PC-3 (cell line): ENCODE measurements at regions of chr14 and their contacts with region 1.

Region 1: GRCh38 chr14:69643443-69644164 is 32.2 kb downstream of the SUSD6 start:
- DNase-seq: peak; percentile 99
- ATAC-seq: peak; percentile 93
- H3K4me3 ChIP-seq: peak overlapping the region; percentile 24; the same call in 1 of the 2 replicates
- H3K27ac ChIP-seq: peak overlapping the region; percentile 82
- H3K4me1 ChIP-seq: peaks cover 43% of the 10 kb centered on the region
- H3K27me3 ChIP-seq: no peaks in the 10 kb centered on the region
- CTCF ChIP-seq: no peak

Region 2: GRCh38 chr14:69611201-69612011 is 32.2 kb before region 1 on chr14 and contains the start of gene SUSD6:
- CTCF ChIA-PET with region 1: no interaction called
- POLR2A ChIA-PET with region 1: interaction called, 8 read pairs
- intact Hi-C with region 1: loop called (anchors 1 kb)
- DNase-seq: peak; percentile 91
- ATAC-seq: peak; percentile 88
- H3K4me3 ChIP-seq: peak within 1 kb of the TSS; percentile 75
- H3K27ac ChIP-seq: no peak within 1 kb of the TSS
- H3K4me1 ChIP-seq: peaks cover 27% of the 10 kb centered on the region
- H3K27me3 ChIP-seq: no peaks in the 10 kb centered on the region
- CTCF ChIP-seq: no peak
- total RNA-seq, gene SUSD6: 6.1 and 9.3 TPM in 2 replicates

Region 3: GRCh38 chr14:69657950-69658355 is 14.3 kb after region 1 on chr14:
- CTCF ChIA-PET with region 1: interaction called, 4 read pairs
- POLR2A ChIA-PET with region 1: interaction called, 3 read pairs
- intact Hi-C with region 1: loop called (anchors 1 kb)
- DNase-seq: peak; percentile 79
- ATAC-seq: peak; percentile 70
- H3K4me3 ChIP-seq: peak overlapping the region; percentile 3; the same call in 1 of the 2 replicates
- H3K27ac ChIP-seq: peak overlapping the region; percentile 64
- H3K4me1 ChIP-seq: peaks cover 55% of the 10 kb centered on the region
- H3K27me3 ChIP-seq: no peaks in the 10 kb centered on the region
- CTCF ChIP-seq: no peak

Region 4: DNA sequence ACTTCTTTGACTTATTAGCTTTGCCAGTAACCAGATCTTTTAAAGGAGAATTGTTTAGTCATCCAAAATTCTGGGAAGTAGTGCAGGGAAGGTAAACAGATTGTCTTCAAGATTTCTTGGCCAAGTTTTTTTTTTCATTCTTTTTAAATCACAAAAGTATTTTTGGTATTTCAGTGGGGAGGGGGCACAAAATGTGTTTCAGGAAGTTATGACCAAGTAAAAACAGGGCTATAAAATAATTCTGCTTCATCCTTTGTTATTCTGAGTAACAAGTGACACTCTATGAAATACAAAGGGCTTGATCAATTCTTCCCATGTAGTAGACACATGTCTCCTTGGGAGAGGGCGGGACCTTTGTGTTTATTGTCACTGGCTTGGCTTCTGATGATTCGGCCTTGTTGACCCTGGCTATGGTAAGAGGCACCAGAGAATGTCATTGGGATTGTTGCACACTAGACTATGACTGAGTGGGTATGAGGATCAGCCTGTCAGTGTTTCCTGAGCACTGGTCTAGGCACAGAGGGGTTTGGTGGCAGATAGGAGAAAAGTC is 23.2 kb after region 1 on chr14:
- CTCF ChIA-PET with region 1: no interaction called
- POLR2A ChIA-PET with region 1: no interaction called
- intact Hi-C with region 1: loop called (anchors 1 kb)
- DNase-seq: peak; percentile 80
- ATAC-seq: peak; percentile 76
- H3K4me3 ChIP-seq: no peak overlapping the region
- H3K27ac ChIP-seq: peak overlapping the region; percentile 49
- H3K4me1 ChIP-seq: peaks cover 32% of the 10 kb centered on the region
- H3K27me3 ChIP-seq: no peaks in the 10 kb centered on the region
- CTCF ChIP-seq: no peak

Region 5: GRCh38 chr14:69708586-69709174 is 65.1 kb after region 1 on chr14:
- CTCF ChIA-PET with region 1: no interaction called
- POLR2A ChIA-PET with region 1: no interaction called
- intact Hi-C with region 1: loop called (anchors 2 kb)
- DNase-seq: peak; percentile 46
- ATAC-seq: peak; percentile 86
- H3K4me3 ChIP-seq: no peak overlapping the region
- H3K27ac ChIP-seq: no peak overlapping the region
- H3K4me1 ChIP-seq: 0 out of 2 replicates have a peak, but pooled peaks cover 2% of the 10 kb centered on the region
- H3K27me3 ChIP-seq: no peaks in the 10 kb centered on the region
- CTCF ChIP-seq: peak; percentile 65

Region 6: DNA sequence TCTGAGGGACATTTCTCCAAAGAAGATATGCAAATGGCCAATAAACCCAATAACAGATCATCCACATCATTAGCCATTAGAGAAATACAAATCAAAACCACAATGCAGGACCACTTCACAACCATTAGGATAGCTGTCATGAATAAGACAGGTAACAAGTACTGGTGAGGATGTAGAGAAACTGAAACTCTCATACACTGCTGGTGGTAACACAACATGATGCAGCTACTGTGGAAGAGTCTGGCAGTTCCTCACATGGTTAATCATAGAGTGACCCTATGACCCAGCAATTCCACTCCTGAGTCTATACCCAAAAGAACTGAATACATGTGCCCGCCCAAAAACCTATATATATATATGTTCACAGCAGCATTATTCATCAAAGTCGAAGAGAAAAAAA is 1037.1 kb after region 1 on chr14:
- CTCF ChIA-PET with region 1: no interaction called
- POLR2A ChIA-PET with region 1: interaction called, 12 read pairs
- intact Hi-C with region 1: no loop called
- DNase-seq: no peak
- ATAC-seq: no peak
- H3K4me3 ChIP-seq: no peak overlapping the region
- H3K27ac ChIP-seq: no peak overlapping the region
- H3K4me1 ChIP-seq: no peaks in the 10 kb centered on the region
- H3K27me3 ChIP-seq: no peaks in the 10 kb centered on the region
- CTCF ChIP-seq: no peak